Activated CD4-positive, alpha-beta memory T cell treated with anti-CD3 and anti-CD28 coated beads, Interleukin-2, amount 10 ng/mL, durations not matched to agents 7 days and 5 days (primary cell): ENCODE measurements at regions of chr2 and their contacts with region 1.

Region 1: GRCh38 chr2:38750891-38751595 is at the start of gene SRSF7:
- DNase-seq: peak; percentile 98
- H3K4me3 Mint-ChIP-seq: peak within 1 kb of the TSS; percentile 97
- H3K27ac Mint-ChIP-seq: peak within 1 kb of the TSS; percentile 98
- H3K4me1 Mint-ChIP-seq: peaks cover 55% of the 10 kb centered on the region
- H3K27me3 Mint-ChIP-seq: no peaks in the 10 kb centered on the region
- total RNA-seq, gene SRSF7: 243 to 249 TPM

Region 2: GRCh38 chr2:38377050-38377828 is 373.8 kb before region 1 on chr2 and contains the start of gene ATL2:
- CTCF ChIA-PET with region 1: no interaction called
- POLR2A ChIA-PET with region 1: interaction called, 27 read pairs
- DNase-seq: peak; percentile 96
- H3K4me3 Mint-ChIP-seq: peak within 1 kb of the TSS; percentile 88
- H3K27ac Mint-ChIP-seq: peak within 1 kb of the TSS; percentile 83
- H3K4me1 Mint-ChIP-seq: peaks cover 51% of the 10 kb centered on the region
- H3K27me3 Mint-ChIP-seq: peaks cover 1% of the 10 kb centered on the region
- total RNA-seq, gene ATL2: 47.9 to 51.9 TPM

Region 3: GRCh38 chr2:38581193-38582147 is 169.6 kb before region 1 on chr2:
- CTCF ChIA-PET with region 1: interaction called, 18 read pairs
- POLR2A ChIA-PET with region 1: interaction called, 25 read pairs
- DNase-seq: peak; percentile 36
- H3K4me3 Mint-ChIP-seq: no peak overlapping the region
- H3K27ac Mint-ChIP-seq: peak overlapping the region; percentile 61
- H3K4me1 Mint-ChIP-seq: peaks cover 74% of the 10 kb centered on the region
- H3K27me3 Mint-ChIP-seq: no peaks in the 10 kb centered on the region

Region 4: GRCh38 chr2:38665854-38666555 is 85.0 kb before region 1 on chr2 and contains the start of gene GALM:
- CTCF ChIA-PET with region 1: no interaction called
- POLR2A ChIA-PET with region 1: interaction called, 40 read pairs
- DNase-seq: peak; percentile 74
- H3K4me3 Mint-ChIP-seq: peak within 1 kb of the TSS; percentile 98
- H3K27ac Mint-ChIP-seq: peak within 1 kb of the TSS; percentile 97
- H3K4me1 Mint-ChIP-seq: peaks cover 71% of the 10 kb centered on the region
- H3K27me3 Mint-ChIP-seq: no peaks in the 10 kb centered on the region
- total RNA-seq, gene GALM: 94.7 to 97.4 TPM

Region 5: GRCh38 chr2:38709567-38710194 is 41.4 kb before region 1 on chr2:
- CTCF ChIA-PET with region 1: no interaction called
- POLR2A ChIA-PET with region 1: interaction called, 11 read pairs
- DNase-seq: peak; percentile 36
- H3K4me3 Mint-ChIP-seq: peak overlapping the region; percentile 24
- H3K27ac Mint-ChIP-seq: peak overlapping the region; percentile 95
- H3K4me1 Mint-ChIP-seq: peaks cover 75% of the 10 kb centered on the region
- H3K27me3 Mint-ChIP-seq: no peaks in the 10 kb centered on the region

Region 6: GRCh38 chr2:38778687-38779082 is 27.6 kb after region 1 on chr2:
- CTCF ChIA-PET with region 1: interaction called, 3 read pairs
- POLR2A ChIA-PET with region 1: interaction called, 34 read pairs
- DNase-seq: no peak
- H3K4me3 Mint-ChIP-seq: peak overlapping the region; percentile 93
- H3K27ac Mint-ChIP-seq: peak overlapping the region; percentile 82
- H3K4me1 Mint-ChIP-seq: peaks cover 24% of the 10 kb centered on the region
- H3K27me3 Mint-ChIP-seq: peaks cover 16% of the 10 kb centered on the region

Region 7: DNA sequence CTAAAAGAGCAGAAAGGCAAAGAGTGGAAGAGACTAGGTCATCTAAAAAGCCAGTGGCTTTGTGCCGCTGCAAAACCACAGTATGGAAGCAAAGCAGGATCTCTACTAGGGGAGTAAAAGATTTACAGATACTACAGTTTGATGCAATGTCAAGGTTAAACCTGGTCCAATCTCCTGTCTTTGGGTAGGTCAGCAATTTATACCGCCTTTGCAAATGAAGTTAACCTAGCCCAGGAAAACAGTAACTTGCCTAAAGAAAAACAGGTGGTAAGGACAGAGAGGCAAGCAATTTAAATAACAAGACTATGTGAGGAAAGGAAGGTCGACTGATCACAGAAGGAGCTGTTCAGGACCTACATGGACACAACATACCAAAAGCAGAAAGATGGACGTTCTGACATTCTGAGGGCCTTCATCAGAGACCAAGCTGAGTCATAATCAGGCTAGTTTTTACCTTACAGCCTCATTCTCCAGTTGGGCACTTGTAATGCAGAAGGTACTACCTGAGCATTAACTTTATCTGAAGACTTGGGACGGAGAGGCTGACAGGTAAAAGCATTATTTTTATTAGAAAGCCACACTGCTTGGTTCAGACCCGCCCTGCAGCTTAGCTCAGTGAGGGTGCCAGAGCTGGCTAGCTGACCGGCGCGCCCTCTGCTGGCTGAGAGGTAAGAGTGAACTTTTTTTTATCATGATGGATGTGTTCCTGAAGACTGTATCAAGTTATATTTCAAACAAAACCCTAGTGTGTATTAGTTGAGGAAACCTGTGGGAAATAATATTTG is 476.8 kb after region 1 on chr2:
- CTCF ChIA-PET with region 1: no interaction called
- POLR2A ChIA-PET with region 1: interaction called, 10 read pairs
- DNase-seq: peak; percentile 88
- H3K4me3 Mint-ChIP-seq: peak overlapping the region; percentile 64
- H3K27ac Mint-ChIP-seq: peak overlapping the region; percentile 90
- H3K4me1 Mint-ChIP-seq: peaks cover 53% of the 10 kb centered on the region
- H3K27me3 Mint-ChIP-seq: no peaks in the 10 kb centered on the region